Posterior cingulate gyrus (tissue), 11 donors: ENCODE measurements at regions of chr1 and their contacts with region 1.

Region 1: GRCh38 chr1:32939655-32940371 is 24.8 kb downstream of the RNF19B start:
- DNase-seq: peak in 2 of 10 donors; percentile 25 to 81

Region 2: GRCh38 chr1:32316903-32317277 is 622.9 kb before region 1 on chr1:
- intact Hi-C with region 1: no loop called
- DNase-seq: no peak

Region 3: GRCh38 chr1:32702599-32703478 is 237.0 kb before region 1 on chr1 and contains the start of gene SYNC:
- intact Hi-C with region 1: no loop called
- DNase-seq: peak in 4 of 10 donors; percentile 40 to 86 (median 79)

Region 4: DNA sequence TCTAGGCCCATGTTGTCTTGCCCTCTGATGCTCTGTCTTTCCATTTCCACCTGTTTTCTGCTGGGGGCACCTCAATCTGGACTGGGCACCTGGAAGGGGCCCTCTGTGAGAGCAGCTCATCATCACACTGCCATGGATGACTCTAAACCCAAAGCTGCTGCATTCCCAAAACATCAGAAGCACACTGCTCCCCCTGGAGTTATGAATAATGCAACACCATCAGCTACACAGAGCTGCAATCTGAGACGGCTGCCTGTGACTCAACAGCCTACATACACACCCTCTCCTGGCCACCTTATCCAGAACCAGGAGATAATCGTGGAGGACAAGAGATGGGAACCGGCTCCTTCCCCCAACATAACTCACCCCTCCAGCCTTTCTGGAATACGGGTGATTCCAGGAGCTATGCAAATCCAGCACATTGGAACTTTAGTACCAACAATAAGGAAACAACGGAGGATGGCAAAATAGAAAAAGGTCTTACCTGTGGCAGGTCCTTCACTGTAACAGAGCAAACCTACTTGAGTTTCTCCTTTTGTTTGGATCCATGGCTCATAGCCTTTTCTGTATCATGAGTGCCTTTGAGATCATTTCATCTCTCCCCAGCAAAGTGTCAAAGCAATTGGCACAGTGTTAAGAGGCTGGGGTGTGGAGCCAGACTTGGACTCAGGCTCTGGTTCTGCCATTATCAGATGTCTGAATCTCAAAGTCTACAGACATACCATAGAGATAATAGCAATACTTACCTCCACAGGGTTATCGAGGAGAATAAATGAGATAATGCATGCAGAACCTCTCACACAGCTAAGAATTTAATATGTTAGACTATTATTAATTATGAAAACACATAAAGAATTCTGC is 67.6 kb after region 1 on chr1:
- intact Hi-C with region 1: loop called (anchors 10 kb)
- DNase-seq: peak in 6 of 10 donors; percentile 25 to 92 (median 55)

Region 5: DNA sequence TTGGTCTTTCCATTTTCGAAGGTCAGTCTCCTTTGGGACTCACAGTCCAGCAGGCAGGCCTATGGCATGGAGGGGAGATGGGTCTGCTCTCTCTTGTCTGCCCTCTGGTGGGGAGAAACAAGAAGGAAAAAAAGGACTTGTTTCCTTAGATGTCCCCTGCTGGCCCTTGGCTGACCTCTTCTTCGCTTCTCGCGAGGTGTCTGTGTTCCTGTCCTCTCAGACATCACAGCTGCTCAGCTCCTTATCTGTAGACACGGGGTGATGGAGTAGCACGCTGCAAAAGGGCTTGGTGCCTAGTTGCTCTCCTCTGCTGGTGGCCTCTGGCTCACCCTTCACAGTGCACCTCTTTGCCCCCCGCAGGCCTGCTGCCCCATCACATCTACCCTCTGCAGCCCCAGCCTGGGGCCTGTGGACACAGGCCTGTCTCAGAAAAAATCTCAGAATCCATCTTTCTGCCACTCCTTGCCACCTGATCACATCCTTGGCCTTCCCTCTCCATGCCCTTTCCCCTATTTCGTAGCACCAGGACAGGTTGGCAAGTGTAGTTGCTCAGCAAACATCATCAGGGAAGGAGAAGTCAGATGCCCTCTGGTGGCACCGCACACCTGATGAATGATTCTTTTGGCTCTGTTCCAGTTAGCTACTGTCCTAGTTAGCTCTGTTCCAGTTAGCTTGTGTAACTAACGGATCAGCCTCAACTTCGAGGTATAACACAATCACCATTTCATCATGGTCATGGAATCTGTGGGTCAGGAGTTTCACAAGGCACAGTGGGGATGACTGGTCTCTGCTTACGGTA is 115.6 kb after region 1 on chr1:
- intact Hi-C with region 1: loop called (anchors 10 kb)
- DNase-seq: peak in 6 of 10 donors; percentile 26 to 86 (median 50)